ENCODE measurements at regions of chrX and their contacts with region 1.

Region 1: GRCh38 chrX:151753313-151754041 is 18.9 kb downstream of the CNGA2 start:
- DNase-seq: peak; percentile 60
- ATAC-seq: peak; percentile 91

Region 2: GRCh38 chrX:151722241-151722846 is 31.1 kb before region 1 on chrX:
- intact Hi-C with region 1: no loop called
- DNase-seq: peak; percentile 47
- ATAC-seq: peak; percentile 67

Region 3: GRCh38 chrX:151902813-151903591 is 149.5 kb after region 1 on chrX:
- intact Hi-C with region 1: no loop called
- DNase-seq: peak; percentile 56
- ATAC-seq: peak; percentile 68

Region 4: GRCh38 chrX:152343306-152343705 is 589.8 kb after region 1 on chrX:
- intact Hi-C with region 1: loop called (anchors 10 kb)
- DNase-seq: no peak
- ATAC-seq: no peak

Region 5: GRCh38 chrX:152632445-152633097 is 879.1 kb after region 1 on chrX:
- intact Hi-C with region 1: loop called (anchors 5 kb)
- DNase-seq: no peak
- ATAC-seq: no peak